OCI-LY7 (cell line): ENCODE measurements at regions of chr15 and their contacts with region 1.

Region 1: GRCh38 chr15:32994810-32995424 is 199.6 kb downstream of the FMN1 start:
- DNase-seq: peak; percentile 44
- H3K4me3 ChIP-seq: no peak overlapping the region
- H3K27ac ChIP-seq: no peak overlapping the region
- H3K4me1 ChIP-seq: no peaks in the 10 kb centered on the region
- CTCF ChIP-seq: peak; percentile 91

Region 2: DNA sequence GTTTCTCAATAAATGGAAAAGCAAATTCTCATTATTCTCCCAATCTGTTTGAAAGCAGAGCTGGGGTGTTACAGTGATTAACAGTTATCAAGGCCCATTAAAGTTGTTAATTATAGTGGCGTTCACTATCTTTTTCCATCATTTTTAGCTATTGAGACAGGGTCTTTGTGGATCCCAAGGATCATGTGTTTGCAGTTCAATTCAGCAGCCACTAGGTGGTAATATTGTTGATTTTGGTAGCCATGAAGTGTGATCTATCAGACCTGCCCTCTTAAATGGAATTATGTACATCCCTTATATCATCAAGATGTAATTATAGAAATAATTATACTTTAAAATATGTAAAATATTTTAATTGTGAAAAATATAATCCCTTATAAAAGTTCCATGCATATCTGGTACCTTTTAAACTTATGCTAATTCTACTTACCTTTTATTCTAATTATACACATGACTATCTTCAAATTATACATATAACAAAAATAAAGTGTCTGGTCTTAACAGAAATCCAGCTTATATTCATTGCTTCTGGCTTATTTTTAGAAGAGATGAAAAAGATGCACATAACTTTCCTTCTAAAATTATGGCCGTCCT is 150.7 kb before region 1 on chr15:
- CTCF ChIA-PET with region 1: no interaction called
- POLR2A ChIA-PET with region 1: no interaction called
- intact Hi-C with region 1: loop called (anchors 2 kb)
- DNase-seq: peak; percentile 61
- H3K4me3 ChIP-seq: no peak overlapping the region
- H3K27ac ChIP-seq: no peak overlapping the region
- H3K4me1 ChIP-seq: no peaks in the 10 kb centered on the region
- CTCF ChIP-seq: peak; percentile 86